ENCODE measurements at regions of chr7 and their contacts with region 1.

Region 1: GRCh38 chr7:69012149-69012548 is 586.1 kb upstream of the AUTS2 start:
- DNase-seq: no peak
- ATAC-seq: no peak
- H3K4me3 ChIP-seq: no peak overlapping the region
- H3K27ac ChIP-seq: no peak overlapping the region
- H3K4me1 ChIP-seq: no peaks in the 10 kb centered on the region
- H3K27me3 ChIP-seq: no peaks in the 10 kb centered on the region
- CTCF ChIP-seq: no peak

Region 2: GRCh38 chr7:68700414-68700813 is 311.7 kb before region 1 on chr7:
- intact Hi-C with region 1: loop called in 1 of 2 experiments (anchors 5 kb)
- DNase-seq: no peak
- ATAC-seq: peak; percentile 62 to 91 (median 76)
- H3K4me3 ChIP-seq: no peak overlapping the region
- H3K27ac ChIP-seq: peak overlapping the region; percentile 36
- H3K4me1 ChIP-seq: no peaks in the 10 kb centered on the region
- H3K27me3 ChIP-seq: no peaks in the 10 kb centered on the region
- CTCF ChIP-seq: no peak

Measured in psoas muscle (tissue), 8 donors.